CD14-positive monocyte (primary cell): ENCODE measurements at regions of chr12 and their contacts with region 1.

Region 1: DNA sequence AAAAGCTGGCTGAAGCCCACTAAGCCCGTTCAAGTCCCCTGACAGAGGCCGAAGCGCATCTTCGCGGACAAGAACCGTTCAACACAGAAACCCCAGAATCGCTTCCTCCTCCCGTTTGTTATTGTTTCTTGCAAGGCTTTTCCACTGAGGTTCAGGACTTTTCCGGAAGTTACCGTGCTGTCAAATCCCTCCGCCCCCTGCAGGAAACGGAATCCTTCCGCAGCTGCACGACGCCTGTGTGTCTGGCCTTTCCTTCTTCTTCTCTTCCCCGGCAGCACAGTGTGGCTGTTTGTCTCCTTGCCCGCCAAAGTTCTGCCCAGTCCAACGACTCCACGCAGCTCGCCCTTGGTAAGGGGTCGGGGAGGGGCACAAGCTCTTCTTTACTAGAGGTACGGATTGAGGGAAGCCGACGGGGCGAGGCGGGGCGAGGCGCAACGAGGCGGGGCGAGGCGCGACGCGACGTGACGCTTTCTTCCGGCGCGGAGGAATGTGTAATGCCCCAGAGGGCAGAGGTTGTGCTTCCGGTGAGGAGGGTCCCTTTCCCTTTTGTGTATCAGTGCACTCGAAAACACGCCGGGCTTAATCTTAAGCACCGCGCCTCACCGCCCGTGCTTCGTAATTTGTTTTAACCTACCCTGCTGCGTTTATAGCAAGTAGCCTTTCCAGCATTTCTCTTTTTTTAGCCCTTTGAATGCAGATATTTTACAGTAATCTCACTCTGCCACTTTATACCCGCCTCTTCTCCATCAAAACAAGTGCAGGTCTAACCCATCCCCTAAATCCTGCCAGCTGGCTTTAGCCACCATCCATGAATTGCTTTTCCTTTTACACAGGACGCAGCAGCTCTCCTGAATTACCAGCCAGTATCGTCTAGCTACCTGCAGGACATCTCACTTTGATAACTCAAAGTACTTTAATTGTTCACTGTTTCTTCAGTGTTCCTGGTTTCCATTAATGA is at the start of gene KDM5A:
- DNase-seq: peak; percentile 91 to 94 (median 93)
- H3K4me3 ChIP-seq: peak within 1 kb of the TSS; percentile 86 to 97 (median 97)
- H3K4me3 Mint-ChIP-seq: peak within 1 kb of the TSS; percentile 93 to 99
- H3K27ac ChIP-seq: peak within 1 kb of the TSS; percentile 92 to 98
- H3K27ac Mint-ChIP-seq: peak within 1 kb of the TSS; percentile 95 to 100 (median 99)
- H3K4me1 ChIP-seq: peaks cover 25 to 38% of the 10 kb centered on the region in 2 donors
- H3K4me1 Mint-ChIP-seq: peaks cover 30% of the 10 kb centered on the region
- H3K27me3 ChIP-seq: no peaks in the 10 kb centered on the region
- H3K27me3 Mint-ChIP-seq: peaks cover 0 to 3% (median 0%) of the 10 kb centered on the region in 3 donors
- CTCF ChIP-seq: no peak
- polyA plus RNA-seq, gene KDM5A: 12.2 to 31.4 (median 17.1) TPM

Region 2: DNA sequence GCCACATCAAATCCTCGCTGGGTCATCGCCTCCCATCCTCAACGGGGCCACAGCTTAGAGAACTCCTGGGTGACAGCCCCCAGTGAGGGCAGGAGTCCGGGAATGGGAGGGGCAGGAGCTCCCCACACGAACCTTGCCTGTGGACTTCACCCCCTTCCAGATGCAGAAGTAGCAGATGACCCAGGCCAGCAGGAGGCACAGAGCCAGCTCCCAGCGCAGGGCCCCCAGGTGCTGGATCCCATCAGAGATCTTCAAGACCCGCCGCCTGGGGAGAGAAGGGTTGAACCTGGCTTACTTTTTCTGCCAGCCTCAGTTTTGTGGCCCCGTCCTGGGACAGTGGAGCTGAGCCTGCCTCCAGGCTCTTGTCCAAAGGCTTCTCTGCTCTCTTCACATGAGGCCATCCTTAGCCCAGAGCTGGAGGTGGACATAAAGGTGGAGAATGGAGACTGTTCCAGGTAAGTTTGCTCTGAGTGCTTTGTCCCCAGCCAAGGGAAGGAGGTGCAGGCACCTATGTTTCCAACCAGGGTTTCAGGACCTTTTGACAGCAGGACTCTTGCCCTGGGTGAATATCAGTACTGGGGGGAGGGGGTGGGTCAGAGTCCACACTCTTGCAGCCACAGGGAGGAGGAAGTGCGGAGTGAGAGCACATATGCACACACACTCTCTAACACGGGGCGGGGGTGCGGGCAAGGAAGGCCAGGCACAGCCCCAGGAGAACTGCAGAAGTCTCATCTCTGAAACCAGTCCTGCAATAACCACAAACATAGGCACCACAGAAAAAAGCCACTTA is 152.2 kb before region 1 on chr12:
- intact Hi-C with region 1: no loop called
- DNase-seq: no peak
- H3K4me3 ChIP-seq: no peak overlapping the region
- H3K4me3 Mint-ChIP-seq: no peak overlapping the region
- H3K27ac ChIP-seq: no peak overlapping the region
- H3K27ac Mint-ChIP-seq: no peak overlapping the region
- H3K4me1 ChIP-seq: no peaks in the 10 kb centered on the region
- H3K4me1 Mint-ChIP-seq: no peaks in the 10 kb centered on the region
- H3K27me3 ChIP-seq: no peaks in the 10 kb centered on the region
- H3K27me3 Mint-ChIP-seq: peaks cover 4 to 14% (median 6%) of the 10 kb centered on the region in 3 donors
- CTCF ChIP-seq: no peak

Region 3: GRCh38 chr12:401235-402028 is 12.0 kb after region 1 on chr12 and contains the start of gene CCDC77:
- intact Hi-C with region 1: loop called in 1 of 2 experiments (anchors 1 kb)
- DNase-seq: peak; percentile 89 to 91 (median 90)
- H3K4me3 ChIP-seq: peak within 1 kb of the TSS; percentile 81 to 93 (median 92)
- H3K4me3 Mint-ChIP-seq: no peak within 1 kb of the TSS
- H3K27ac ChIP-seq: peak within 1 kb of the TSS; percentile 69 to 80
- H3K27ac Mint-ChIP-seq: no peak within 1 kb of the TSS
- H3K4me1 ChIP-seq: peaks cover 12 to 20% of the 10 kb centered on the region in 2 donors
- H3K4me1 Mint-ChIP-seq: peaks cover 4% of the 10 kb centered on the region
- H3K27me3 ChIP-seq: no peaks in the 10 kb centered on the region
- H3K27me3 Mint-ChIP-seq: no peaks in the 10 kb centered on the region
- CTCF ChIP-seq: no peak
- polyA plus RNA-seq, gene CCDC77: 4.1 to 7.7 (median 5.1) TPM